Activated CD4-positive, alpha-beta memory T cell treated with anti-CD3 and anti-CD28 coated beads for 36 hours (primary cell): ENCODE measurements at regions of chr9 and their contacts with region 1.

Region 1: DNA sequence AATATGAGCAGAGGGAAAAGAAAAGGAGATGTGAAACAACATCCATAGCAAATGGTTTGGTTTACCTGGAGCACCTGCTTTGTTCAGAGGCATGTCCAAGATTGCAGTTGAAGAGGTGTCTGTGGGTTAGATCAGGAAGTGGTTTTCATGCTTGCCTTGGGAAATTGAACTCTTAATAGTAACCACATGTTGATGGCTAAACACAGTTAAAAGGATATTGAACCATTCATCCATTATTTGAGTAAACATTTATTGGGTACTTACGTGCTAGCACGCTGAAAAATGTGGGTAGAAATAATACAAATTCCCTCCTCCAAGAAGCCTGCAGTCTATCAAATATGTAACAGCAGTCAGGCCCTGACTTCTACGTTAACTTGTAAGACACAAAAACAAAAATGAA is 235.7 kb upstream of the TNC start:
- DNase-seq: no peak
- H3K4me3 Mint-ChIP-seq: no peak overlapping the region
- H3K27ac Mint-ChIP-seq: no peak overlapping the region
- H3K4me1 Mint-ChIP-seq: no peaks in the 10 kb centered on the region
- H3K27me3 Mint-ChIP-seq: no peaks in the 10 kb centered on the region

Region 2: GRCh38 chr9:114754581-114754980 is 599.1 kb before region 1 on chr9:
- CTCF ChIA-PET with region 1: no interaction called
- POLR2A ChIA-PET with region 1: no interaction called
- intact Hi-C with region 1: loop called (anchors 5 kb)
- DNase-seq: no peak
- H3K4me3 Mint-ChIP-seq: no peak overlapping the region
- H3K27ac Mint-ChIP-seq: no peak overlapping the region
- H3K4me1 Mint-ChIP-seq: peaks cover 6% of the 10 kb centered on the region
- H3K27me3 Mint-ChIP-seq: no peaks in the 10 kb centered on the region